ENCODE measurements at regions of chr10 and their contacts with region 1.

Region 1: GRCh38 chr10:52951824-52952223 is 179.2 kb upstream of the MBL2 start:
- DNase-seq: peak; percentile 97
- ATAC-seq: peak; percentile 44
- H3K4me3 ChIP-seq: no peak overlapping the region
- H3K27ac ChIP-seq: no peak overlapping the region
- H3K4me1 ChIP-seq: peaks cover 24% of the 10 kb centered on the region
- H3K27me3 ChIP-seq: no peaks in the 10 kb centered on the region
- CTCF ChIP-seq: peak; percentile 99

Region 2: GRCh38 chr10:52677086-52677485 is 274.7 kb before region 1 on chr10:
- CTCF ChIA-PET with region 1: no interaction called
- POLR2A ChIA-PET with region 1: no interaction called
- intact Hi-C with region 1: no loop called
- DNase-seq: peak; percentile 36
- ATAC-seq: no peak
- H3K4me3 ChIP-seq: no peak overlapping the region
- H3K27ac ChIP-seq: no peak overlapping the region
- H3K4me1 ChIP-seq: peaks cover 12% of the 10 kb centered on the region
- H3K27me3 ChIP-seq: no peaks in the 10 kb centered on the region
- CTCF ChIP-seq: no peak

Region 3: DNA sequence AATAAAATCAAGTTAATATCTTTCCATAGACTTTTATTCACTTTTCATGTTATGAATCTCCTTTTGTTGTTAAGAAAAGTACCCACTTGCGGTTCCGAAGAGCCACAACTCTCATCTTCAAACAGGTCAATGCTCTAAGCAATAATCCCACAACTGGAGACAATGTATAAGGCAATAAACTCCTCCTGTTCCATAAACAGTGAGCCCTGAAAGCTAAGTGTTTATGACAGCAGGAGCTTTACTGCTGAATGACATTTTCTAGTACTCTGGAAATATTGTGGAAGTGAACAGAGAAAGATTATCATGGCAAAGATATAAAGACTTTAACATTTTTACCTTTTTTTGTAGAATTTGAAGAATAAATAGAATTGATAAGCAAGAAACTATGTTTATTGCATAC is 34.3 kb after region 1 on chr10:
- CTCF ChIA-PET with region 1: no interaction called
- POLR2A ChIA-PET with region 1: interaction called, 3 read pairs
- intact Hi-C with region 1: loop called (anchors 2 kb)
- DNase-seq: no peak
- ATAC-seq: no peak
- H3K4me3 ChIP-seq: no peak overlapping the region
- H3K27ac ChIP-seq: no peak overlapping the region
- H3K4me1 ChIP-seq: no peaks in the 10 kb centered on the region
- H3K27me3 ChIP-seq: no peaks in the 10 kb centered on the region
- CTCF ChIP-seq: no peak

Region 4: GRCh38 chr10:52999258-52999657 is 47.4 kb after region 1 on chr10:
- CTCF ChIA-PET with region 1: no interaction called
- POLR2A ChIA-PET with region 1: no interaction called
- intact Hi-C with region 1: no loop called
- DNase-seq: no peak
- ATAC-seq: no peak
- H3K4me3 ChIP-seq: no peak overlapping the region
- H3K27ac ChIP-seq: no peak overlapping the region
- H3K4me1 ChIP-seq: peaks cover 14% of the 10 kb centered on the region
- H3K27me3 ChIP-seq: no peaks in the 10 kb centered on the region
- CTCF ChIP-seq: no peak

Region 5: DNA sequence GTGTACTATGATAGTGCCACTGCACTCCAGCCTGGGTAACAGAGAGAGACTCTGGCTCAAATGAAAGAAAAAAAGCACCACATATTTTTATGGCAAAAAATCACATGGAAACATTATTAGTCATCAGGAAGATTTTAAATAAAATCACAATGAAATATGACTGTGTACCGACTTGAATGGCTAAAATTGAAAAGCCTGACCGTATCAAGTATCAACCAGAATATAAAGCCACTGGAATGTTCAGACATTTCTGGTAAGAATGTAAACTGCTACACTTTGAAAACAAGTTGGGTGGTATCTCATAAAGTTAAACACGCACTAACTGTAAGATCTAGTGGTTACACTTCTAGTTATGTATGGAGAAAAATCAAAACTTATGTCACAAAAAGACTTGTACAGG is 127.5 kb after region 1 on chr10:
- CTCF ChIA-PET with region 1: no interaction called
- POLR2A ChIA-PET with region 1: interaction called, 3 read pairs
- intact Hi-C with region 1: loop called (anchors 1 kb)
- DNase-seq: peak; percentile 89
- ATAC-seq: peak; percentile 99
- H3K4me3 ChIP-seq: no peak overlapping the region
- H3K27ac ChIP-seq: peak overlapping the region; percentile 1; the same call in 1 of the 2 replicates
- H3K4me1 ChIP-seq: peaks cover 10% of the 10 kb centered on the region
- H3K27me3 ChIP-seq: no peaks in the 10 kb centered on the region
- CTCF ChIP-seq: no peak

Region 6: GRCh38 chr10:53209944-53210611 is 258.3 kb after region 1 on chr10:
- CTCF ChIA-PET with region 1: interaction called, 18 read pairs
- POLR2A ChIA-PET with region 1: no interaction called
- intact Hi-C with region 1: loop called (anchors 1 kb)
- DNase-seq: peak; percentile 97
- ATAC-seq: peak; percentile 96
- H3K4me3 ChIP-seq: no peak overlapping the region
- H3K27ac ChIP-seq: no peak overlapping the region
- H3K4me1 ChIP-seq: no peaks in the 10 kb centered on the region
- H3K27me3 ChIP-seq: no peaks in the 10 kb centered on the region
- CTCF ChIP-seq: peak; percentile 99

Region 7: DNA sequence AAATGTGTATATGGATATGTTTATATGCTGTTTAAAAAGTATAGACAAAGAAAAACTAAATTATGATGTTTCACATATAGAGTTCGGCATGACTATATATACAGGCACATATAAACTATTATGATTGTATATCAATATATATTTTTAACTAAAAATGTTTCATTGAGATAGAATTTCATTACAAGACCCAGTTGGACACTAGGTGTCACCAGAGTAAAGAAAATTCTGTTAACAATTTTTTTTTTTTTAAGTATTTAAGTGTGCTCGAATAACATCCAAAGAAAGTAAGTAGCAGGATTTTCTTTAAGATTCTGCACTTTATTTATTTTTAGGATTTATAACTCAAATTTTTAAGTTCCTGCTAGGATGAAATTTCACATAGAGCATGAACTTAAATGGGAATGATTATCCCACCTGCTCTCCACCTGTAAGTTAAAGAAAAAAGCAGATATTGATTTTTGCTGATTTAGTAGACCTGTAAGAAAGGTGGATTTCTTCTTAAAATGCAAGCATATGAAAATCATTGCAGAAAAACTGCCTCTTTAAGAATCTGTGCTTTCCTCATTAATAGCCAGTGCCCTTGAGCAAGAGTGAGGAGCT is 887.7 kb after region 1 on chr10:
- CTCF ChIA-PET with region 1: no interaction called
- POLR2A ChIA-PET with region 1: no interaction called
- intact Hi-C with region 1: loop called (anchors 5 kb)
- DNase-seq: peak; percentile 78
- ATAC-seq: no peak
- H3K4me3 ChIP-seq: no peak overlapping the region
- H3K27ac ChIP-seq: no peak overlapping the region
- H3K4me1 ChIP-seq: peaks cover 9% of the 10 kb centered on the region; the same call in 1 of the 2 replicates
- H3K27me3 ChIP-seq: no peaks in the 10 kb centered on the region
- CTCF ChIP-seq: peak; percentile 71

Region 8: GRCh38 chr10:54203401-54203800 is 1251.6 kb after region 1 on chr10:
- CTCF ChIA-PET with region 1: no interaction called
- POLR2A ChIA-PET with region 1: no interaction called
- intact Hi-C with region 1: loop called (anchors 5 kb)
- DNase-seq: peak; percentile 83
- ATAC-seq: peak; percentile 95
- H3K4me3 ChIP-seq: peak overlapping the region; percentile 27
- H3K27ac ChIP-seq: peak overlapping the region; percentile 70
- H3K4me1 ChIP-seq: peaks cover 20% of the 10 kb centered on the region
- H3K27me3 ChIP-seq: no peaks in the 10 kb centered on the region
- CTCF ChIP-seq: no peak

Measured in PC-3 (cell line).